ENCODE measurements at regions of chr15 and their contacts with region 1.

Region 1: DNA sequence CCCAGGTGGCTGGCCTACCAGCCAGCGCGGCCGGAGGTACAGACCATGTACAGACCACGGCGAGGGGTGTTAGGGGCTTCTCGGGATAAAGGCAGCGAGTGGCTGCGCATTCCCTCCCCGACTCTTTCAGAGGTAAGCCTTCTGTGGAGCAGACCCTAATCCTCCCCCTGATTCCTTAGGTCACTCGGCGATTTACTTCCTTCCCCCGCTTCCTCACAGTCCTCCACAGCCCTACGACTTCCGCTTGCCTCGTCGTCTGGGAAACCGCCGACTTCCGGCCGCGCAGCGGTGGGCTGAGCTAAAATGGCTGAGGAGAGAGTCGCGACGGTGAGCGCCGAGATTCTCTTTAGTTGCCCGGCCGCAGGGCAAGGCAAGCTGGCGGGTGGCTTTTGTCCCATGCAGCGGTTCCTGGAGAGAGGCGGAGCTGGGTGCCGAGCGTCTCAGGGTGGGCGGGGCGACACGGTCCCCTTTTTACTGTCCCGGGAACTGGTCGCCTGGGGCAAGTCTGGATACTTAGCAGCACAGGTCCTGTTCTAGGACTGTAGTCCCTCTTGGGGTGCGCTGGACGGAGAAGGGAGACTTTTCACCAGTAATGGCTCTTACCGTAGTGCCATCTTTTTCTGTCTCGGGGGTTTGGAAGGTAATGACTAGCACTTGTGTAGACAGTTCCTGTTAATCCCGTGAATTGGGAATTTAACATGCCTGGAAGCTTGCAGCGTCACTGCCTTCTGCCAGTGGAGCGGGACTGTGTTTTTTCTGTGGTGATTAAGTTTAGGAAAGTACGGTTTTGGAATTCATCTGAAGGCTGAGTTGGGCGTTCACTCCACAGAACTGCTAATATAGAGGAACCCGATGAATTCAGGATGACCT is at the starts of genes BBS4 and HIGD2B:
- DNase-seq: peak; percentile 93
- ATAC-seq: peak; percentile 96
- H3K4me3 Mint-ChIP-seq: peak within 1 kb of the TSS; percentile 89
- H3K27ac Mint-ChIP-seq: peak within 1 kb of the TSS; percentile 92
- H3K4me1 Mint-ChIP-seq: peaks cover 20% of the 10 kb centered on the region
- H3K27me3 Mint-ChIP-seq: no peaks in the 10 kb centered on the region
- total RNA-seq, gene BBS4: 13.7 to 14.9 TPM
- total RNA-seq, gene HIGD2B: not detected

Region 2: DNA sequence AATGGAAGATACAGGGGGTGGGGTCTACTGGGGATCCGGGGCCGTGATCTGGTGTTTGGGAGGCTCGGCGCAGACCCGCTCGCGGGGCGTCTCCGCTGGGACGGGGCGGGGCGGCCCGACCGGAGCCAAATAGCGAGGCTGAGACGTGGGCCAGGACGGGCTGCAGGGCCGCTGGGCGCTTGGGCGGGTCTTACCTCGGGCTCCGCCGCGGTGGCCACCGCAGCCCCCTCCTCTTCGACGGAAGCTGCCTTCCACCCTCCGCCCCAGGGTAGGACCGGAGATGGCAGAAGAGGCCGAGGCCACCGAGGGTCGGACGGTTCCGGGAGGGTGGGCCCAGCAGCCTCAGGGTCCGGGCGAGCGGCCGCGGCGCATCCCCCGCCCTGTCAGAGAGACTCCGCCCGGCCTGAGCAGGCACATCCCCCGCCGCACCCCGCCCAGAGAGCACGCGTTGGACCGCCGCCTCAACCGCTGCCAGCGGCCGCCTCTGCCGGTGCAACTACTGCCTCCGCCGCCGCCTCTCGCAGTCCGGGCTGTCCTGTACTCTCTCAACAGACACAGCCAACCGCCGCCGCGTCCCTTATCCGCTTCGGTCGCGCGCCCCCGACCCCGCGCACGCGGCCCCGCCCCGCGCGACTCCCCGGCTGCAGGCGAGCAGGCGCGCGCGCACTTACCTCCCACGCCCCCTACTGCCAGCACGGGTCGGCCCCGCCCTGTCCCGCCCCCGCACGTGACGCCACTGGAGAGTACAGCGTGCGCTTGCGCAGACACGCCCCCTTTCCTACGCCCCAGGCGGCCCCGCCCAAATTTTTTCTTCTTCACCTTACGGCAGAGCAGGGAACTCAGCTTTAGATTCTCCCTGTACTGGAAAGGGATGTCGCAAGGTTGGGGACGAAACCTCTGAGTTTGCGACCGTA is 568.4 kb before region 1 on chr15 and contains the start of gene MYO9A:
- CTCF ChIA-PET with region 1: no interaction called
- POLR2A ChIA-PET with region 1: no interaction called
- intact Hi-C with region 1: loop called in 1 of 2 experiments (anchors 1 kb)
- DNase-seq: peak; percentile 100
- ATAC-seq: peak; percentile 73
- H3K4me3 Mint-ChIP-seq: peak within 1 kb of the TSS; percentile 98
- H3K27ac Mint-ChIP-seq: peak within 1 kb of the TSS; percentile 96
- H3K4me1 Mint-ChIP-seq: peaks cover 40% of the 10 kb centered on the region
- H3K27me3 Mint-ChIP-seq: no peaks in the 10 kb centered on the region
- total RNA-seq, gene MYO9A: 19.0 to 20.3 TPM

Region 3: DNA sequence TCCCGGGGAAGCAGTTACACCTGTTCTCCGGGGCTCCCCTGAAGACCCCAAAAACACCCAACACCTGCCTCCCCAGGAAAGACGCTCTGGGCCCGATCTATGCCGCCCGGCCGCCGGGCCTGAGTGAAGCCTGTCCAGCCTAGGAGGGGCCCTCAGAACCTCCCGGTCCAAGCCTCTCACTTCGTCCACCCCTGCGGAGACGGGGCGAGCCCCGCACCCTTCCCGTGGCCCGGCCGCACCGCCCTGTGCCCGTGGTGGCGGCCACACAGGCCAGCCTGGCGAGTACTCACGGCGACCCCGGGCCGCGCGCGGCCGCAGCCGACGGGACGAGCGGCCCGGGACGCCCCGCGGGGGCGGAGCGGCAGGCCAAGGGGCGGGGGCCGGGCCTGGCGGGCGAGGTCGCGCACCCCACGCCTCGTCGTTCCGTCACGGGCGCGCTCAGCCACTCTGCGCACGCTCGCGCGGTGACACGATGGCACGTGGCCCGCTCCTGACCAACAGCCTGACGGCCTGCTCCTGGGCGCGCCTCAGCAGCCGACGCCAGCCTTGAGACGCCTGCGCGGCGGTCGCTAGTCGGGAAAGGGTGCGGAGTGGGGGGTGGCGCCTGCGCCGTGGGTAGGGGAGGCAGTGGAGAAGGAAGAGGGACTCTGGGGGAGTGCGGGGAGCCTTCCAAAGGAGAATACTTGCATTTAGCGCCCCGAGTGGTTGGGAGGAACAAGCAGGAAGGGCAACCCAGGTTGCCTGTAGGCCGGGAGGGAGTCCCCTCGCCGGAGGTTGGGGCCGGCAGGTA is 413.8 kb before region 1 on chr15 and contains the start of gene PARP6:
- CTCF ChIA-PET with region 1: no interaction called
- POLR2A ChIA-PET with region 1: no interaction called
- intact Hi-C with region 1: loop called in 1 of 2 experiments (anchors 1 kb)
- DNase-seq: peak; percentile 99
- ATAC-seq: peak; percentile 98
- H3K4me3 Mint-ChIP-seq: peak within 1 kb of the TSS; percentile 80
- H3K27ac Mint-ChIP-seq: peak within 1 kb of the TSS; percentile 92
- H3K4me1 Mint-ChIP-seq: peaks cover 35% of the 10 kb centered on the region
- H3K27me3 Mint-ChIP-seq: no peaks in the 10 kb centered on the region
- total RNA-seq, gene PARP6: 41.4 to 58.2 TPM

Region 4: DNA sequence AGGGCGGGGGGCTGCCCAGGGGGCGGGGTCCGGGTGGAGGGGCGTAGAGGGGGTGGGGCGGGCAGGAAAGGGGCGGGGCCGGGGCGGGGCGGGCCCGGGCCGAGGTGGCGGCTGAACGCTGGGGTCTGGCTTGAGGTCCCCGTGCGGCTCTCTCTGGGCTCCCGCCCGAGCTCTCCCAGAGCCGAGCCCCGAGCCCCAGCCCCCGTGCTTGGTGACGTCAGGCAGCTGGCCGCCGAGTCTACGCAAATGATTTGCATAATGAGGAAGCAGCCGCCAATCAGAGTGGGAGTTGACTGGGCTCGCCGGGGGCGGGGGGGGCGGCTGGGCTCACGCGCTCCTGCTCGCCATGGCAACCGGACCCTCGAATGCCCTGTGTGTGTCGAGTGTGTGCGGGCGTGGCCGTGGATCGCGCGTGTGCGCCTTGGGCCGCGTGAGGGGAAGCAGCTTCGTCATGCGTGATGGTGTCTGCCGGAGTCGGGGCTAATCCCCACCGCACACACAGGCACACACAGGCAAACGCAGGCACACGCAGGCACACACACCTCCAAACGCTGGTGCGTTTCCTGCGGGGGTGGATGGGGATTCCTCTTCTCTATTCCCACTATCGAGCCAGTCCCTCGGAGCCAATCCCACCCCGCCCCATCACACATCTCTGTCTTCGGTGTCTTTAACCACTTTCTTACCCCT is 366.0 kb before region 1 on chr15 and contains the start of gene CELF6:
- CTCF ChIA-PET with region 1: no interaction called
- POLR2A ChIA-PET with region 1: no interaction called
- intact Hi-C with region 1: loop called in 1 of 2 experiments (anchors 5 kb)
- DNase-seq: peak; percentile 84
- ATAC-seq: peak; percentile 78
- H3K4me3 Mint-ChIP-seq: peak within 1 kb of the TSS; percentile 71
- H3K27ac Mint-ChIP-seq: peak within 1 kb of the TSS; percentile 21
- H3K4me1 Mint-ChIP-seq: peaks cover 15% of the 10 kb centered on the region
- H3K27me3 Mint-ChIP-seq: peaks cover 8% of the 10 kb centered on the region
- total RNA-seq, gene CELF6: 0.37 to 0.40 TPM

Region 5: GRCh38 chr15:72473614-72474465 is 212.3 kb before region 1 on chr15 and contains the start of gene ARIH1:
- CTCF ChIA-PET with region 1: no interaction called
- POLR2A ChIA-PET with region 1: no interaction called
- intact Hi-C with region 1: loop called (anchors 1 to 5 kb)
- DNase-seq: peak; percentile 97
- ATAC-seq: peak; percentile 78
- H3K4me3 Mint-ChIP-seq: peak within 1 kb of the TSS; percentile 92
- H3K27ac Mint-ChIP-seq: peak within 1 kb of the TSS; percentile 92
- H3K4me1 Mint-ChIP-seq: peaks cover 36% of the 10 kb centered on the region
- H3K27me3 Mint-ChIP-seq: no peaks in the 10 kb centered on the region
- total RNA-seq, gene ARIH1: 177 to 195 TPM

Region 6: DNA sequence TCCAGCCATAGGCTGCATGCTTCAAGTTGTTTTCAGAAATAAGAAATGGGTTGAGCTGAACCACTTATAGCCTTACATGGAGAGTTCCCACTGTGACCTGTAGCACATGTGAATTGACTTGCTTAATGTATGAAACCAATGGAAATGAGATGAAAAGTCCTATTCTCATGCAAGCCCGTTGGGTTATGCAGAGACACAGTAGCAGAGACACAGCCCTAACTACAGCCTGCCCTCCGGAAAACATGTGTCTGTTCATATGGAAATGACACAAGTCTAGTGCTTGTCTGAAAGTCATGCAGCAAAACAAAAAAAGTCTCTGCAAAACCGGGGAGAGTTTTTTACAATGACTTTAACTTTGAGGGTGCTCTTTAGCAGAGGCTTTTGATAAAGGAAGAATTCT is 14.6 kb before region 1 on chr15:
- CTCF ChIA-PET with region 1: interaction called, 16 read pairs
- POLR2A ChIA-PET with region 1: no interaction called
- intact Hi-C with region 1: no loop called
- DNase-seq: no peak
- ATAC-seq: no peak
- H3K4me3 Mint-ChIP-seq: no peak overlapping the region
- H3K27ac Mint-ChIP-seq: no peak overlapping the region
- H3K4me1 Mint-ChIP-seq: peaks cover 6% of the 10 kb centered on the region
- H3K27me3 Mint-ChIP-seq: peaks cover 3% of the 10 kb centered on the region

Region 7: DNA sequence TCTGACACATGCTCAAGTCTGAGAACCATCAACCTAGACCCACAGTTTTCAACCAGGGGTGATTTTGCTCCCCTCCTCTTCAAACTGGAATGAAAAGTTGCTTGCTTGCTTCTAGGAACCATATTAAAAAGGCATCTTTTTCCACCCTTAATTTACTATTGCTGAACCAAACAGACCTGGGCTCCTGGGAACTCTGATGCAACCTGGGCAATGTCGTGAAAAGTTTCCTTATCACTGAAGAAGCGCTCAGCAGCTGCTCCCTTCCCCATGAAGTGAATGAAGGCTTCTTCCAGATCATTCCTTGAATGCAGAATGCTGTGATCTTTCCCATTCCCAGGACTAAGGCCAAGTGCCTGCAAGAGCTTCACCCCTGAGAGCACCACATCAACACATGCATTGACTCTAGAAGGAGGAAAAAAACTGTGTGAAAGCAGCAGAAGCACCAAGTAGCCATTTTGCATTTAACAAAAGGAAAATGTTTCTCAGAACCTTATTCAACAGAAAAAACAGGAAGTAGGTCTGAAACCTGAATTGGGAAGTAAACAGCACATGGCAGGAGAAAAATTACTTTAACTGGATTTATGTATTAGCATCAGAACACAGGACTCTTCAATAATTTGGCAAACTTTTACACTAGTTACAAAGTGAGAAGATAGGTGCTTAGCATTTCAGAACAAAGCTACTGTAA is 88.7 kb after region 1 on chr15:
- CTCF ChIA-PET with region 1: no interaction called
- POLR2A ChIA-PET with region 1: no interaction called
- intact Hi-C with region 1: no loop called
- DNase-seq: no peak
- ATAC-seq: no peak
- H3K4me3 Mint-ChIP-seq: no peak overlapping the region
- H3K27ac Mint-ChIP-seq: no peak overlapping the region
- H3K4me1 Mint-ChIP-seq: peaks cover 44% of the 10 kb centered on the region
- H3K27me3 Mint-ChIP-seq: no peaks in the 10 kb centered on the region